ENCODE measurements at regions of chr15 and their contacts with region 1.

Region 1: DNA sequence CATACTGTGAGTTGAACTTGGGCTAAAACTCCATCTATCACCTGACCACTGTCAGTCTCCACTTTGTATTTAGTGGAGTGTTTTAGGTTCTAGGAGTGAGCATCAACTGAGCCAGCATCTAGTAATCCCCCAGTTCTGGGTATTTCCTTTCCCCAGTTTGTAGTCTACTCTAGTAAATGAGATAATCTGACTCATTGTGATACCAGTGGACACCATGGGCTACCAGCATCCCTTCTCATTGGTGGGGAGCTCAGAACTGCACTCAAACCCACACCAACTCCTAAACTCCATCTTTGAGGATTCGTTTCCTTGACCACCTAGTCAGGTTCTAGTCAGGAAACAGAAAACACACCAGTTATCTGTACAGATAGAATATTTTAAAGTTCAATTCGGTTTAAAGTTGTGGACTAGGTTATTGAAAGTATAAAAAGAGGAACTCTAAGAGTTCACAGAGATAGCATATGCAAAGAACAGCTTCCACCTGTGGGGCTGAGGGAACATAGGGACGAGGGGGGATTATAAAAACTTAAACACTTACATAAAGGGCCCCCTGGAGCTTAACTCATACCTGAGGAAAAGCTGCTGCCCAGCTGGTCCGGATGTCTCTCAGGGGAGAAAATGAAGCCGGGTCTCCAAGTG is 36.0 kb downstream of the LEO1 start:
- DNase-seq: no peak
- H3K4me3 ChIP-seq: no peak overlapping the region
- H3K27ac ChIP-seq: no peak overlapping the region
- H3K4me1 ChIP-seq: no peaks in the 10 kb centered on the region
- H3K27me3 ChIP-seq: no peaks in the 10 kb centered on the region
- CTCF ChIP-seq: no peak

Region 2: GRCh38 chr15:52095638-52096151 is 160.1 kb after region 1 on chr15:
- CTCF ChIA-PET with region 1: no interaction called
- POLR2A ChIA-PET with region 1: interaction called, 10 read pairs
- intact Hi-C with region 1: no loop called
- DNase-seq: peak; percentile 20 to 95
- H3K4me3 ChIP-seq: no peak overlapping the region
- H3K27ac ChIP-seq: peak overlapping the region; percentile 90
- H3K4me1 ChIP-seq: peaks cover 34% of the 10 kb centered on the region
- H3K27me3 ChIP-seq: no peaks in the 10 kb centered on the region
- CTCF ChIP-seq: no peak

Measured in PC-9 (cell line).